B cell (primary cell): ENCODE measurements at regions of chr1 and their contacts with region 1.

Region 1: GRCh38 chr1:212284744-212285684 is at the start of gene PPP2R5A:
- DNase-seq: peak; percentile 100
- ATAC-seq: peak; percentile 85
- H3K4me3 ChIP-seq: peak within 1 kb of the TSS; percentile 75 to 97 (median 92)
- H3K4me3 Mint-ChIP-seq: peak within 1 kb of the TSS; percentile 93
- H3K27ac ChIP-seq: peak within 1 kb of the TSS; percentile 89 to 90
- H3K27ac Mint-ChIP-seq: peak within 1 kb of the TSS; percentile 96
- H3K4me1 ChIP-seq: peaks cover 22 to 28% of the 10 kb centered on the region in 2 donors
- H3K4me1 Mint-ChIP-seq: peaks cover 41% of the 10 kb centered on the region
- H3K27me3 ChIP-seq: no peaks in the 10 kb centered on the region
- H3K27me3 Mint-ChIP-seq: no peaks in the 10 kb centered on the region
- CTCF ChIP-seq: peak; percentile 62
- total RNA-seq, gene PPP2R5A: 41.1 and 43.4 TPM in 2 replicates

Region 2: DNA sequence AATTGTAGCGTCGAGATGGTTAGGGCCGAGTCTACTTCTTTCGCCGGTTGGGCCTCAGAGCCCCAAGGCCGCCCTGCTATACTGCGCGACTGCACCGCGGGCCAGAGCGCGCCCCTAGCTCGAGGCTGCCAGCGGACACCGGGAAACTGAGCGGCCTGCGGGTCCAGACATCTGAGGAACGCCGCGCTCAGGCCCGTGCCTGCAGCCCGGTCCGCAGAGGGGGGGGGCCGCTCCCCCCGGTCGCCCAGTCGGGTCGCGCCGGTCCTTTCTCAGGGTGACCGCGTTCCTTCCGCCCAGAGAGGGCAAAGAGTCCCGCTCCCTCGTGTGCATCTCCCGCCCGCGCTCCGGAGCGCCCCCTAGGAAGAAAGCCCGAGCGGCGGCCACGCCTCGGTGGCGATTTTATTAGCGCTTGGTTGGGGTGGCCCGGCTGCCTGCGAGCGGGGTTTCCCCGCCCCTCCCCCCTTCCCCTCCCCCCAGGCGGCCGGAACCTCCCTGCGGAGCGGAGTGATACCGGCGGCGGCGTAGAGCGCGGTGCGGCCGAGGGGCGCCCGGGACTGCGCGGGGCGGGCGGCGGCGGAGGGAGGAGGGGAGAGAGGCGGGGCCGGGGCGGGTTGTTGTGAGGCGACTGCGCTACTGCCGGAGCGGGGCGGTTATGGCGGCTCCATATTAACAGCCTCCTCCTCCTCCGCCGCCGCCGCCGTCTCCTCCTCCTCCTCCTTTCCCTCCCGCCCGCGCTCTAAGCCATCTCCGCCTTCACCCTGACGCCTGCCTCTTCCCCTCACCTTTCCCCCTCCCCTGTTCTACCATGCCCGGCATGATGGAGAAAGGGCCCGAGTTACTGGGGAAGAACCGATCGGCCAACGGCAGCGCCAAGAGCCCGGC is 1026.0 kb before region 1 on chr1 and contains the start of gene RCOR3:
- CTCF ChIA-PET with region 1: no interaction called
- POLR2A ChIA-PET with region 1: no interaction called
- intact Hi-C with region 1: loop called (anchors 5 kb)
- DNase-seq: peak; percentile 93
- ATAC-seq: peak; percentile 74
- H3K4me3 ChIP-seq: peak within 1 kb of the TSS; percentile 81 to 93 (median 90)
- H3K4me3 Mint-ChIP-seq: peak within 1 kb of the TSS; percentile 92
- H3K27ac ChIP-seq: peak within 1 kb of the TSS; percentile 88 to 90
- H3K27ac Mint-ChIP-seq: peak within 1 kb of the TSS; percentile 96
- H3K4me1 ChIP-seq: peaks cover 11 to 16% of the 10 kb centered on the region in 2 donors
- H3K4me1 Mint-ChIP-seq: peaks cover 15% of the 10 kb centered on the region
- H3K27me3 ChIP-seq: no peaks in the 10 kb centered on the region
- H3K27me3 Mint-ChIP-seq: no peaks in the 10 kb centered on the region
- CTCF ChIP-seq: peak; percentile 84
- total RNA-seq, gene RCOR3: 120 and 124 TPM in 2 replicates

Region 3: DNA sequence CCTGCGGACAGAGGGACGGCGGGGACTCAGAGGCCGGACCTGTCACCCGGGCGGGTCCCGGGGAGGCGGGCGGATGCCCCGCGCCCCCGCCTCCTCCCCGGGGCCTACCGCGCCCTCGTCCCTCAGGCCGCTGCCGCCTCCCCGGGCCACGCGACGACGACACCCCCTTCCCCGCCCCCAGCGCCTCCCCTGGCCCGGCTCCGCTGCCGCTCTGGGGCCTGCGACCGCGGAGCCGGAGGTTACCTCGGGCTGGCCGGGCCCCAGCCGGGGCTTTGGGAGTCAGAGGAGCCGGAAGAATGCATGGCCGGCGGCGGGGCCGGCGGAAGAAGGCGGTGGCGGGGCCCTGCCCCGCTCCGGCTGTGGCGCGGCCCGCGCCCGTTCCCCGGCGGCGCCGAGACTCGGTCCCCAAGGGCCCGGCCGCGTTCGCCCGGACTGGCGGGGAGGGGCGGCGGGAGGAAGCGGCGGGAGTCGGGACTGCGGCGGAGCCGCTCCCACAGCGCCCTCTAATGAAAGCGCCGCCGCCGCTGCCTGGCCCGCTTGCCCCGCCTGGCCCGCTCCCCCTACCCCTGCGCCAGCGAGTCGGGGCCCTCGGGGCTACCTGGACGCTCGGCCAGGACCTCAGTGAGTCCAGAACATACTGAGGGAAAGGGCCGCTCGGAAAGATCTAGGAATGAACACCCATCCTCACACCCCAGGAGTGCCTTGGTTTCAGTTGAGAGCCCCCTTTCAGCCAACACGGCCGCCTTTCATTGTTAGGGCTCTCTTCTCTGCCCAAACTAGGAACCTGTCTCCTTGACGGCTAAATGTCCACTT is 454.5 kb before region 1 on chr1 and contains the start of gene LPGAT1:
- CTCF ChIA-PET with region 1: no interaction called
- POLR2A ChIA-PET with region 1: no interaction called
- intact Hi-C with region 1: loop called (anchors 1 kb)
- DNase-seq: peak; percentile 86
- ATAC-seq: peak; percentile 85
- H3K4me3 ChIP-seq: peak within 1 kb of the TSS; percentile 48 to 85 (median 72)
- H3K4me3 Mint-ChIP-seq: peak within 1 kb of the TSS; percentile 94
- H3K27ac ChIP-seq: peak within 1 kb of the TSS; percentile 39 to 80
- H3K27ac Mint-ChIP-seq: peak within 1 kb of the TSS; percentile 91
- H3K4me1 ChIP-seq: peaks cover 44 to 49% of the 10 kb centered on the region in 2 donors
- H3K4me1 Mint-ChIP-seq: peaks cover 58% of the 10 kb centered on the region
- H3K27me3 ChIP-seq: no peaks in the 10 kb centered on the region
- H3K27me3 Mint-ChIP-seq: no peaks in the 10 kb centered on the region
- CTCF ChIP-seq: peak; percentile 76
- total RNA-seq, gene LPGAT1: 60.1 and 63.8 TPM in 2 replicates

Region 4: GRCh38 chr1:212186427-212187207 is 98.4 kb before region 1 on chr1:
- CTCF ChIA-PET with region 1: no interaction called
- POLR2A ChIA-PET with region 1: interaction called, 5 read pairs
- intact Hi-C with region 1: loop called (anchors 10 kb)
- DNase-seq: peak; percentile 72
- ATAC-seq: peak; percentile 97
- H3K4me3 ChIP-seq: peak overlapping the region in 2 of 5 experiments; percentile 18 to 49
- H3K4me3 Mint-ChIP-seq: peak overlapping the region; percentile 75
- H3K27ac ChIP-seq: peak overlapping the region; percentile 31 to 67
- H3K27ac Mint-ChIP-seq: peak overlapping the region; percentile 81
- H3K4me1 ChIP-seq: peaks cover 26 to 27% of the 10 kb centered on the region in 2 donors
- H3K4me1 Mint-ChIP-seq: peaks cover 24% of the 10 kb centered on the region
- H3K27me3 ChIP-seq: no peaks in the 10 kb centered on the region
- H3K27me3 Mint-ChIP-seq: no peaks in the 10 kb centered on the region
- CTCF ChIP-seq: no peak

Region 5: GRCh38 chr1:212323066-212323465 is 38.1 kb after region 1 on chr1:
- CTCF ChIA-PET with region 1: no interaction called
- POLR2A ChIA-PET with region 1: no interaction called
- intact Hi-C with region 1: no loop called
- DNase-seq: no peak
- ATAC-seq: no peak
- H3K4me3 ChIP-seq: no peak overlapping the region
- H3K4me3 Mint-ChIP-seq: no peak overlapping the region
- H3K27ac ChIP-seq: no peak overlapping the region
- H3K27ac Mint-ChIP-seq: no peak overlapping the region
- H3K4me1 ChIP-seq: no peaks in the 10 kb centered on the region
- H3K4me1 Mint-ChIP-seq: peaks cover 12% of the 10 kb centered on the region
- H3K27me3 ChIP-seq: no peaks in the 10 kb centered on the region
- H3K27me3 Mint-ChIP-seq: no peaks in the 10 kb centered on the region
- CTCF ChIP-seq: no peak

Region 6: DNA sequence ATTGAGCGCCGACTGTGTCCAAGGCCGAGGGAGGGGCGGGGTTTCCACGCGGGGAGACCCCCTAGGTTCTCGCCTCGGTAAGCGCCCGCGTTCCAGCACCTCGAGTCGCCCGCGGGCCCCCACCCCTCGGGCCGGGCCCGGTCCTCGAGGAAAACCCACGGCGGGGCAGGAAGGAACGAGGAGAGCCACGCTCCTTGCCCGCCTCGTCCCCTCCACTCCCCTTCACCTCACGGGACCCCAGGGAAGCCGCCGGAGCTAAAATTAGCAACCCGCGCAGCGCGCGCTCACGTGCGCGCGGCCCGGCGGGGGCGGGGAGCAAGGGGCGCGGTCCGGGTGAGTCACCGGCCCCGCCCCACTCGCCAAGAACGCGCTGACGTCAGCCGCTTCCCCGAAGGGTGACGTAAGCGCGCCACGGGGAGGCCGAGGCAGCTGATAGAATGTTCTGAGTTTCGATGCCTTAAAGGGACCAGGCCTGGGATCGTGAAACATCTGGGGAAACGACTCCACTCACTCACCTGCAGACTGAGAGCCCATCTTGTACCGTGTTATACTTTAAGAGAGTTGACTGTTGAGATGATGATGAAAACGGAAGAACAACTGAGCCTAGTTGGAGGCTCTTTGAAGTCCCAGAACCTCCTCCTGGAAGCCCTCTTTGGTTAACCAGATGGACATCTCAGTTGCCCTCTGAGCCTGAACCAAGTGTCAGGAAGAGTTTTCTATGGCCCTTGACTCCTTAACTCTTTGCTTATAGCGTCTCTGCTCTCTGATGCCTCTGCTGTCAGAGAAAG is 273.9 kb after region 1 on chr1:
- CTCF ChIA-PET with region 1: no interaction called
- POLR2A ChIA-PET with region 1: no interaction called
- intact Hi-C with region 1: loop called (anchors 1 kb)
- DNase-seq: peak; percentile 97
- ATAC-seq: peak; percentile 92
- H3K4me3 ChIP-seq: peak overlapping the region; percentile 36 to 89 (median 73)
- H3K4me3 Mint-ChIP-seq: peak overlapping the region; percentile 90
- H3K27ac ChIP-seq: peak overlapping the region; percentile 95 to 96
- H3K27ac Mint-ChIP-seq: peak overlapping the region; percentile 96
- H3K4me1 ChIP-seq: peaks cover 12% of the 10 kb centered on the region in 2 donors
- H3K4me1 Mint-ChIP-seq: peaks cover 13% of the 10 kb centered on the region
- H3K27me3 ChIP-seq: peaks cover 0 to 5% (median 0%) of the 10 kb centered on the region in 4 experiments
- H3K27me3 Mint-ChIP-seq: peaks cover 4% of the 10 kb centered on the region
- CTCF ChIP-seq: no peak